ENCODE measurements at regions of chr10 and their contacts with region 1.

Region 1: DNA sequence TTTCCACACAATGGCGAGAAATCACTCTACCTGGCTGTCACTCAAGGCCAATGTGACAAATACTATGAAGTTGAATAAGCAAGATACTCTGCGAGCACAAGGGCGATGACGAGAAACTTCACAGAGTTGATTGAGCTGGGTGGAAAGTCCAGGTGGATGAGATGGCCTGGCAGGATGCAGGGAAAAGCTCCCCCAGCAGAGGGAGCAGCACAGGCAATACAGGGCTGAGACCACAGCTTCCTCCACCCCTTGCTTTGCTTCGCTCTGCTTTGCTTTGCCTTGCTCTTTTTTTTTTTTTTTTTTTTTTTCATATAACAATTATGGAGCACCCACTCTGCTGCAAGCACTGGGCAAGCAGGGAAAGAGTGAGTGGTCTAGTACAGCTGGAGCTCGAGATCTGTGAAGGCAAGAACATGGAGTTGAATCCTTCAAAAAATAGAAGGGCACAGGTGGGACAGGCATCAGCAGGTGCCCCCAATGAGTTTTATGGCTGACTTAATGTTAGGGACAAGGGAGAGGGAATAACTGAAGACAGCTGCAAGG is 88.3 kb downstream of the CABCOCO1 start:
- DNase-seq: peak; percentile 64
- ATAC-seq: peak; percentile 98
- H3K4me3 ChIP-seq: no peak overlapping the region
- H3K27ac ChIP-seq: no peak overlapping the region
- H3K4me1 ChIP-seq: peaks cover 18 to 37% of the 10 kb centered on the region in 2 experiments
- H3K27me3 ChIP-seq: no peaks in the 10 kb centered on the region
- CTCF ChIP-seq: peak; percentile 53 to 86 (median 76); a peak in 5 of 6 replicates
- POLR2A ChIP-seq: no peak
- RAD21 ChIP-seq: peak; percentile 67

Region 2: GRCh38 chr10:60883187-60883586 is 867.8 kb before region 1 on chr10:
- CTCF ChIA-PET with region 1: no interaction called
- POLR2A ChIA-PET with region 1: no interaction called
- RAD21 ChIA-PET with region 1: no interaction called
- intact Hi-C with region 1: no loop called
- DNase-seq: peak; percentile 8
- ATAC-seq: peak; percentile 89
- H3K4me3 ChIP-seq: no peak overlapping the region
- H3K27ac ChIP-seq: no peak overlapping the region
- H3K4me1 ChIP-seq: no peaks in the 10 kb centered on the region
- H3K27me3 ChIP-seq: no peaks in the 10 kb centered on the region
- CTCF ChIP-seq: peak; percentile 16 to 66 (median 63); a peak in 4 of 6 replicates
- POLR2A ChIP-seq: no peak
- RAD21 ChIP-seq: peak; percentile 26; the same call in 1 of the 2 replicates

Region 3: GRCh38 chr10:61655335-61655851 is 95.6 kb before region 1 on chr10:
- CTCF ChIA-PET with region 1: no interaction called
- POLR2A ChIA-PET with region 1: no interaction called
- RAD21 ChIA-PET with region 1: no interaction called
- intact Hi-C with region 1: no loop called
- DNase-seq: no peak
- ATAC-seq: no peak
- H3K4me3 ChIP-seq: no peak overlapping the region
- H3K27ac ChIP-seq: no peak overlapping the region
- H3K4me1 ChIP-seq: no peaks in the 10 kb centered on the region
- H3K27me3 ChIP-seq: no peaks in the 10 kb centered on the region
- CTCF ChIP-seq: no peak
- POLR2A ChIP-seq: no peak
- RAD21 ChIP-seq: no peak

Region 4: DNA sequence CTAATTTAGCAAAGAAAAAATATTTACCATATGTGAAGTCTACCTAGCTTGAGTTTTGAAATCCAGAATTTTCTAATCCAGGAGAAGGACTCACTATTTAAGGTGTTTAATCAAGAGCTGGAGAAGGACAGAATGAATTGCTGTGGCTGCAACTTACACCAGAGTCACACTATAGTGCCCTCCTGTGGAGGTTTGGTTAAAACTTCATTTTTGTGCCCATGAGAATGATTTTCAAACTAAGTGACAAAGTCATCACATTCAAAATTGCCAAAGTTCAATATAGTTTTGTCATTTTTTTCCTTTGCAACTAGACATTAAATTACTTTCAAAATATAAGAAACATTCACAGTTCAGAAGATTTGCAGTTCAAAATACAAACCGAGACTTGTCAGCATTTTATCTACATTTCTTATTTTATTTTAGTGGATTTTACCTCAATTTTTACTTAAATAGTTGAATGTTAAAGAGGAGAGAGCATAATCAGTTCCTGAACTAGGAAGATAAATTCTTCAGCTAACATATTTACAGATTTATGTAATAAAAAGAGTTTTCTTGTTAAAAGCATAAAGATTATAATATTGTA is 17.6 kb before region 1 on chr10:
- CTCF ChIA-PET with region 1: interaction called, 13 read pairs
- POLR2A ChIA-PET with region 1: no interaction called
- RAD21 ChIA-PET with region 1: no interaction called
- intact Hi-C with region 1: no loop called
- DNase-seq: peak; percentile 47
- ATAC-seq: peak; percentile 60; the same call in 1 of the 2 replicates
- H3K4me3 ChIP-seq: no peak overlapping the region
- H3K27ac ChIP-seq: no peak overlapping the region
- H3K4me1 ChIP-seq: no peaks in the 10 kb centered on the region
- H3K27me3 ChIP-seq: no peaks in the 10 kb centered on the region
- CTCF ChIP-seq: peak; percentile 52 to 71 (median 53); a peak in 5 of 6 replicates
- POLR2A ChIP-seq: no peak
- RAD21 ChIP-seq: peak; percentile 74

Region 5: DNA sequence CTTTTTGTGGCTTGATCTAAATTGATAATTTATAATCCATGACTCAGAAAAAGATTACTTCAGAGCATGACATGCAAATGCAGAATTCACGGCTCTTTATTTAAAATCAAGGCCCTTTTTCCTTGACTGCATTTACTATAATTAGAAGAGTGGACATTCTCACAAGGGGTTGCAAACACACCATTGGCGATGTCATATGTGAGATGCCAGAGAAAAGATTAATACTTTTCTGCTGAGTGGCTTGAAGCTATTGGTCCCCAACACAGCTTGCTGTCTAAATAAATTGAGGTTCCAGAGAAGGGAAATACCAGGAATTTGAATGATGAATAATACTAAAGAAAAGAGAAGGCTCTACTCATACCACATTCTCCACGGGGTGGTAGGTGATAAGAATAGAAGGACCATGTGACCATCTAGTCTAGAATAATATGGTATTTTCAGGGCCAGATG is 71.8 kb after region 1 on chr10:
- CTCF ChIA-PET with region 1: interaction called, 71 read pairs
- POLR2A ChIA-PET with region 1: no interaction called
- RAD21 ChIA-PET with region 1: interaction called in 1 of 2 experiments, 5 read pairs
- intact Hi-C with region 1: loop called (anchors 1 kb)
- DNase-seq: no peak
- ATAC-seq: no peak
- H3K4me3 ChIP-seq: no peak overlapping the region
- H3K27ac ChIP-seq: no peak overlapping the region
- H3K4me1 ChIP-seq: no peaks in the 10 kb centered on the region
- H3K27me3 ChIP-seq: no peaks in the 10 kb centered on the region
- CTCF ChIP-seq: no peak
- POLR2A ChIP-seq: no peak
- RAD21 ChIP-seq: no peak

Region 6: GRCh38 chr10:61896854-61897661 is 146.1 kb after region 1 on chr10:
- CTCF ChIA-PET with region 1: interaction called, 10 read pairs
- POLR2A ChIA-PET with region 1: no interaction called
- RAD21 ChIA-PET with region 1: no interaction called
- intact Hi-C with region 1: loop called (anchors 5 kb)
- DNase-seq: peak; percentile 80
- ATAC-seq: peak; percentile 79
- H3K4me3 ChIP-seq: peak overlapping the region in 1 of 2 experiments; percentile 18; a peak in 1 of 4 replicates
- H3K27ac ChIP-seq: peak overlapping the region; percentile 43; the same call in 1 of the 2 replicates
- H3K4me1 ChIP-seq: peaks cover 15 to 31% of the 10 kb centered on the region in 2 experiments
- H3K27me3 ChIP-seq: no peaks in the 10 kb centered on the region
- CTCF ChIP-seq: peak; percentile 50 to 70 (median 69); a peak in 5 of 6 replicates
- POLR2A ChIP-seq: no peak
- RAD21 ChIP-seq: peak; percentile 53

Region 7: GRCh38 chr10:61910894-61911293 is 159.9 kb after region 1 on chr10:
- CTCF ChIA-PET with region 1: no interaction called
- POLR2A ChIA-PET with region 1: no interaction called
- RAD21 ChIA-PET with region 1: no interaction called
- intact Hi-C with region 1: no loop called
- DNase-seq: no peak
- ATAC-seq: no peak
- H3K4me3 ChIP-seq: no peak overlapping the region
- H3K27ac ChIP-seq: no peak overlapping the region
- H3K4me1 ChIP-seq: no peaks in the 10 kb centered on the region
- H3K27me3 ChIP-seq: no peaks in the 10 kb centered on the region
- CTCF ChIP-seq: no peak
- POLR2A ChIP-seq: no peak
- RAD21 ChIP-seq: no peak

Region 8: DNA sequence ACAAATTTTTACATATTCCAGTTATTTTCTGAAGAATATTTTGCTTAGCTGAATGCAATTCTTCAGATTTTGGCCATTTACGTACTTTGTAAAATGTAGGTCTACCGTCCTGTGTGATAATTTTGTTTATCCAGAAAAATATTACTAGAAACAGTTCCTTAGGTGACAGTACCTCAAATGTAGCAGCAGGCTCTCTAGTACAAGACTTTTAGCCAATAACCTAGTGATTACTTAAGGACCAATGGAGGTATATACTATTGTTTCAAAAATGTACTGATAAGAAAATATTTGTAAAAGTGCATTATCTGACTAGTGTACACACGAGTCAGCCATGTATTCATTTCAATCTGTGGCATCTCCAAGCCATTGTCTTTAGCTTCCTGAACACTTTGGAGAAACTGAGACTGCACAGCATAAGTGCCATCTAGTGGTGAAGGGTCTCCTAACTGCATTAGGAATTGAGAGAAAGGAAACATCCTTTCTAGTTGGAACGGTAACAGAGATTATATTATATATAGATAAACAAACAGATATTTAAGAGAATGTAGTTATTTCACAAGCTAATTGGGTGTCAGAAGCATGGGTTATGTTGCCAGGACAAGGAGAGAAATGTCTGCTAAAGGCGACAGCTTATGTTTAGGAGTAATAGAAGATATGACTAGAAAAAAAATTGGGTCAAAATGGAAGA is 493.9 kb after region 1 on chr10:
- CTCF ChIA-PET with region 1: interaction called, 5 read pairs
- POLR2A ChIA-PET with region 1: no interaction called
- RAD21 ChIA-PET with region 1: no interaction called
- intact Hi-C with region 1: loop called (anchors 10 kb)
- DNase-seq: peak; percentile 53
- ATAC-seq: peak; percentile 84
- H3K4me3 ChIP-seq: no peak overlapping the region
- H3K27ac ChIP-seq: no peak overlapping the region
- H3K4me1 ChIP-seq: peaks cover 6 to 13% of the 10 kb centered on the region in 2 experiments
- H3K27me3 ChIP-seq: no peaks in the 10 kb centered on the region
- CTCF ChIP-seq: peak; percentile 83 to 91 (median 83)
- POLR2A ChIP-seq: no peak
- RAD21 ChIP-seq: peak; percentile 86

Measured in HCT116 (cell line).